WTC11 (cell line): ENCODE measurements at regions of chrX and their contacts with region 1.

Region 1: GRCh38 chrX:153635788-153636622 is 11.0 kb upstream of the DUSP9 start:
- DNase-seq: peak; percentile 70
- ATAC-seq: peak; percentile 97
- H3K4me3 Mint-ChIP-seq: no peak overlapping the region
- H3K27ac Mint-ChIP-seq: no peak overlapping the region
- H3K4me1 Mint-ChIP-seq: no peaks in the 10 kb centered on the region
- H3K27me3 Mint-ChIP-seq: peaks cover 6% of the 10 kb centered on the region
- CTCF ChIP-seq: no peak

Region 2: DNA sequence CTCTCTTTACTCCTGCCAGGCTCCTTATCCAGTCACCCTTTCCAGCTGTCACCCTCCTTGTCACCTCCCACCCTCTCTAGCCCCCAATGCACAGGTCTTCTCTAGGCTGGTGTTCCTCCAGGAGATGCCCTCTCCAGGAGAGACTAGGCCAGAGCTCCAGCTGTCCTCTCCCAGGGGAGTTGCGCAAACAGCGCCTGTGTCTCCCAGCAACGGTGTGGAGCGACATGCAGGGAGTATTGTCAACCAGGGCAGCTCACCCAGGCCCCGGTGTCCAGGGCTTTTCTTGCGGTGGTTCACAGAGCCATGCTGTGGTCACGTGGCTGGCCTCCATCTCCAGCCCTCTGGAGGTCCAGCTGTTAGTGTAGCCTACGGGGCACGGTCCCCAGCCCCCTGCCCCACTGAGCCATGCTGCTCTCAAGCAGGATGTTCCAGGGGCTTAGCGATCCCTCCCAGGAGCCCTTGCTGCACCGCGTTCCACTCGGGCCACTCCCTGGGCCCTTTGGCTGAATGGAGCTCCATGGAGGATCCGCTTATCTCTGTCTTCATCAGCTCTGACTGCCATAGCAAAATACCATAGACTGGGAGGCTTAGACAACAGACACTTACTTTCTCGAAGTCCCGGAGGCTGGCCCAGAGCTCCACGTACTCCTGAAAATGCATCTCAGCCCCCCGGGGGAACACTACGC is 71.8 kb before region 1 on chrX:
- CTCF ChIA-PET with region 1: interaction called, 10 read pairs
- POLR2A ChIA-PET with region 1: no interaction called
- DNase-seq: no peak
- ATAC-seq: no peak
- H3K4me3 Mint-ChIP-seq: no peak overlapping the region
- H3K27ac Mint-ChIP-seq: no peak overlapping the region
- H3K4me1 Mint-ChIP-seq: peaks cover 8% of the 10 kb centered on the region
- H3K27me3 Mint-ChIP-seq: no peaks in the 10 kb centered on the region; the same call in 1 of the 2 replicates
- CTCF ChIP-seq: no peak

Region 3: DNA sequence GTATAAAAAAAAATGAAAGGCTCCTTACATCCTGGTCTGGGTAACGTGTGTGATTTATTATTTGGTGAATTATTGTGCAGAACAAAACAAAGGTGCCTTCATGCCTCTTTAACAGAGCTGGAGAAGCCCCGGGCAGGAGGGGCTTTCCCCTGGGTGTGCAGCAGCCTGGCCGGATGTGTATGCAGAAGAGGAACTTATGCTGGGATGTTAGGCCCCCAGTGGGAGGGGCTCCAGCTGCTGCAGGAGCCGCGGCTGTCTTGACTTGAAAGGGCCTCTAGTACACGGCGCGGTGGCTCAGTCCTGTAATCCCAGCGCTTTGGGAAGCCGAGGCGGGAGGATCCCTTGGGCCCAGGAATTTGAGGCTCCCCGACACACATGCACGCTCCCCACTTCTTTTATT is 53.1 kb before region 1 on chrX:
- CTCF ChIA-PET with region 1: interaction called, 15 read pairs
- POLR2A ChIA-PET with region 1: no interaction called
- DNase-seq: no peak
- ATAC-seq: no peak
- H3K4me3 Mint-ChIP-seq: no peak overlapping the region
- H3K27ac Mint-ChIP-seq: no peak overlapping the region
- H3K4me1 Mint-ChIP-seq: peaks cover 14% of the 10 kb centered on the region
- H3K27me3 Mint-ChIP-seq: no peaks in the 10 kb centered on the region; the same call in 1 of the 2 replicates
- CTCF ChIP-seq: no peak

Region 4: GRCh38 chrX:153599192-153600031 is 36.6 kb before region 1 on chrX:
- CTCF ChIA-PET with region 1: interaction called, 15 read pairs
- POLR2A ChIA-PET with region 1: no interaction called
- DNase-seq: peak; percentile 77
- ATAC-seq: peak; percentile 92
- H3K4me3 Mint-ChIP-seq: peak overlapping the region; percentile 69
- H3K27ac Mint-ChIP-seq: no peak overlapping the region
- H3K4me1 Mint-ChIP-seq: peaks cover 13% of the 10 kb centered on the region
- H3K27me3 Mint-ChIP-seq: peaks cover 4% of the 10 kb centered on the region
- CTCF ChIP-seq: no peak

Region 5: GRCh38 chrX:153609917-153610428 is 26.0 kb before region 1 on chrX:
- CTCF ChIA-PET with region 1: interaction called, 16 read pairs
- POLR2A ChIA-PET with region 1: no interaction called
- DNase-seq: peak; percentile 87
- ATAC-seq: peak; percentile 94
- H3K4me3 Mint-ChIP-seq: peak overlapping the region; percentile 64
- H3K27ac Mint-ChIP-seq: no peak overlapping the region
- H3K4me1 Mint-ChIP-seq: no peaks in the 10 kb centered on the region
- H3K27me3 Mint-ChIP-seq: peaks cover 52% of the 10 kb centered on the region
- CTCF ChIP-seq: peak; percentile 59

Region 6: DNA sequence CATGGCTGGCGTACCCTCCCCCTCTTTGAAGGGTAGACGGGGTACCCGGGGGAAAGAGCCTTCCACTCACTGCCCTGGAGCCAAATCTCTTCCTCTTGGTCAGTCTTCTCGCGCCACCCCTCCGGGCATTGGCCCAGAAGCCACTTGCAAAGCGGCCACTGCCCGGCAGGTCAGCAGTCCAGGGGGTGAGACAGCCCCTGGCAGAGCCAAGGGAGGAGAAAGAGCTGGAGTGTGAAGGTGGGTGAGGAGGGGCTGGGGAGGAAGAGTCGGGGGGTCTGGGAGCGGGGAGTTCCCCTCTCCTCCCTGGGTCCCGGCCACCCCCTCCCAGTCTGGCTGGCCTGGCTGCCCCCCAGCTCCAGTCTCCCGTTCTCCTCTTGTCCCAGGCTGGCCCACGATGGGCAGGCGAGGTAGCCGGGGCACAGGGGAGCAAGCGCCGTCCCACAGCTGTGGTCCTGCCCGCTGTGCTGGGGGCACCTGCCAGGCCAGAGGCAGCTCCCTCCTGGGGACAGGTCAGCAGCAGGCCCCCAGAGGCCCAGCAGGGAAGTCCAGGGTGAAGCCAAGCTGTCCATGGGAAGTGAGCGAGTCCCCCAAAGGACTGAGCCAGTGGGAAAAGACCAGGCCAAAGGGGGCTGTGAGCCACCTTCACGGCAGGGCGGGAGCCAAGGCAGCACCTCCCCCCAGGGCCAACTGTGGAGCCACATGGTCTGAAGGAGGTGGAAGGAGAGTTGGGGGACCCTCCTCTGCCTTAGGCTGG is 10.6 kb before region 1 on chrX:
- CTCF ChIA-PET with region 1: interaction called, 10 read pairs
- POLR2A ChIA-PET with region 1: no interaction called
- DNase-seq: no peak
- ATAC-seq: no peak
- H3K4me3 Mint-ChIP-seq: no peak overlapping the region
- H3K27ac Mint-ChIP-seq: no peak overlapping the region
- H3K4me1 Mint-ChIP-seq: no peaks in the 10 kb centered on the region
- H3K27me3 Mint-ChIP-seq: no peaks in the 10 kb centered on the region; the same call in none of the 2 replicates
- CTCF ChIP-seq: no peak

Region 7: DNA sequence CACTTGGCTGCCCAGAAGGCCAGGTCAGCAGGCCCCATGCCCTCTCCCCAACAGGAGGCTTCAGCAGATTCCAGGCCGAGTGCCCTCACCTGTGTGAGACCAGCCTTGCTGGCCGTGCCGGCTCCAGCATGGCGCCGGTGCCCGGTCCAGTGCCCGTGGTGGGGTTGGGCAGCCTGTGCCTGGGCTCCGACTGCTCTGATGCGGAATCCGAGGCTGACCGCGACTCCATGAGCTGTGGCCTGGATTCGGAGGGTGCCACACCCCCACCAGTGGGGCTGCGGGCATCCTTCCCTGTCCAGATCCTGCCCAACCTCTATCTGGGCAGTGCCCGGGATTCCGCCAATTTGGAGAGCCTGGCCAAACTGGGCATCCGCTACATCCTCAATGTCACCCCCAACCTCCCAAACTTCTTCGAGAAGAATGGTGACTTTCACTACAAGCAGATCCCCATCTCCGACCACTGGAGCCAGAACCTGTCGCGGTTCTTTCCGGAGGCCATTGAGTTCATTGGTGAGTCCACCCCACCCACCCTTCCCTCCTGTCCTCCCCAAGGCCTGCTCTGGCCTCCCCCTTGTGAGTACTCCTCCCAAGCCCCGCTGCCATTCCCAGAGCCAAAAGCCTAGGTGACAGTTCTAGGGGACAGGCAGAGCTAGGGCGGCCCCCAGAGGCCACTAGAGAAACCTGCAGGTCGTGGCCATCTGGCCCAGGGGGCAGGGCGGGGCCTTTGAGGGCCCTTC is 13.3 kb after region 1 on chrX:
- CTCF ChIA-PET with region 1: interaction called, 106 read pairs
- POLR2A ChIA-PET with region 1: no interaction called
- DNase-seq: peak; percentile 73
- ATAC-seq: peak; percentile 73
- H3K4me3 Mint-ChIP-seq: no peak overlapping the region
- H3K27ac Mint-ChIP-seq: no peak overlapping the region
- H3K4me1 Mint-ChIP-seq: no peaks in the 10 kb centered on the region
- H3K27me3 Mint-ChIP-seq: peaks cover 50% of the 10 kb centered on the region
- CTCF ChIP-seq: no peak

Region 8: DNA sequence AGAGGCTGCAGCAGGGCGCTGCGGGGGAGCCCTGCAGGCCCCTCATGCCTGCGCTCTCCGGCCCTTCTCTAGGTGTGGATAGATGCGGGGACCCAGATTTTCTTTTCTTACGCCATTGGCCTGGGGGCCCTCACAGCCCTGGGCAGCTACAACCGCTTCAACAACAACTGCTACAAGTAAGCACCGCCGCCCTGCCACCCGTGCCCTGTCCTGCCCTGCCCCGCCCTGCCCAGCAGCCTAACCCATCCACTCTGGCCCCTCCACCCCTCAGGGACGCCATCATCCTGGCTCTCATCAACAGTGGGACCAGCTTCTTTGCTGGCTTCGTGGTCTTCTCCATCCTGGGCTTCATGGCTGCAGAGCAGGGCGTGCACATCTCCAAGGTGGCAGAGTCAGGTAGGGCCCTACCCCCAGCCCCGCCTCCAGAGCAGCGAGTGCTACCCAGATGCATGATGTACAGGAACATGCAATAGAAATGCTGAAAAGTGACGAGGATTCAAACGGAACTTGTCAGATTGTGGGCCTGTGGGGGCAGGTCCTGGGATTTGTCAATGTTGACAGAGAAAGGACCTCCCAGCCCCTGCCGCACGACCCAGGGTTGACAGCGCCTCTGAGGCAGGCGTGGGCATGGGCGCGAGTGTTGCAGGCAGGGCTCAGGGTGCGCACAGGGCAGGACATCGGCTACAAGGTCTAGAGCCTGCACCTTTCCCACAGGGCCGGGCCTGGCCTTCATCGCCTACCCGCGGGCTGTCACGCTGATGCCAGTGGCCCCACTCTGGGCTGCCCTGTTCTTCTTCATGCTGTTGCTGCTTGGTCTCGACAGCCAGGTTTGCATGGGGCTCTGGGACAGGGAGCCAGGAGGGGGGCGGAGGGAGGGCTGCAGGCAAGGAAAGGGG is 57.4 kb after region 1 on chrX:
- CTCF ChIA-PET with region 1: no interaction called
- POLR2A ChIA-PET with region 1: no interaction called
- DNase-seq: no peak
- ATAC-seq: no peak
- H3K4me3 Mint-ChIP-seq: no peak overlapping the region
- H3K27ac Mint-ChIP-seq: no peak overlapping the region
- H3K4me1 Mint-ChIP-seq: no peaks in the 10 kb centered on the region
- H3K27me3 Mint-ChIP-seq: no peaks in the 10 kb centered on the region
- CTCF ChIP-seq: no peak

Region 9: DNA sequence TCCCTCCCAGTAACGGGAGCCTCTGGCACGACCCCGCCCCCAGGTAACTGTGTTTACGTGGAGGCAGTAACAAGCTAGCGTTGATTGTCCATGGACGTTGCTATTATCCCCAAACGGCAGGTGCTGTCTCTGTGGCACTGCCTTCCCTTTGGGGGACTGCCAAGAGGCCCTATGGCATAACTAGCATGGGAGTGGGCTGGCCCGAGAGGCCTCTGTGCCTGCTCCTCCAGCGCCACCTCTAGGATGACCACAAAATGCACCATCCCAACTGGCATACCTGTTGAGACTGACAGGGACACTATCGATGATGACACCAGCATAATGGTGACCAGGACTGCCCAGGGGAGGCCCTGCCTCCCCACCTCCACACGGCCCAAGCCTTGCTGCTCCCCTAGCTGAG is 146.3 kb after region 1 on chrX:
- CTCF ChIA-PET with region 1: no interaction called
- POLR2A ChIA-PET with region 1: no interaction called
- DNase-seq: peak; percentile 48
- ATAC-seq: peak; percentile 36
- H3K4me3 Mint-ChIP-seq: no peak overlapping the region
- H3K27ac Mint-ChIP-seq: no peak overlapping the region
- H3K4me1 Mint-ChIP-seq: no peaks in the 10 kb centered on the region; the same call in 1 of the 2 replicates
- H3K27me3 Mint-ChIP-seq: no peaks in the 10 kb centered on the region
- CTCF ChIP-seq: no peak

Region 10: GRCh38 chrX:153900831-153901752 is 265.1 kb after region 1 on chrX:
- CTCF ChIA-PET with region 1: no interaction called
- POLR2A ChIA-PET with region 1: no interaction called
- DNase-seq: no peak
- ATAC-seq: peak; percentile 53
- H3K4me3 Mint-ChIP-seq: no peak overlapping the region
- H3K27ac Mint-ChIP-seq: no peak overlapping the region
- H3K4me1 Mint-ChIP-seq: peaks cover 23% of the 10 kb centered on the region
- H3K27me3 Mint-ChIP-seq: no peaks in the 10 kb centered on the region
- CTCF ChIP-seq: no peak